CD4-positive, alpha-beta T cell (primary cell): ENCODE measurements at regions of chr16 and their contacts with region 1.

Region 1: GRCh38 chr16:4616047-4616811 is 1.5 kb upstream of the UBALD1 start:
- DNase-seq: peak; percentile 97 to 100 (median 98)
- ATAC-seq: peak; percentile 89
- H3K4me3 ChIP-seq: peak overlapping the region; percentile 76
- H3K4me3 Mint-ChIP-seq: peak overlapping the region; percentile 99
- H3K27ac ChIP-seq: peak overlapping the region; percentile 90 to 97
- H3K27ac Mint-ChIP-seq: peak overlapping the region; percentile 98
- H3K4me1 ChIP-seq: peaks cover 59% of the 10 kb centered on the region
- H3K4me1 Mint-ChIP-seq: peaks cover 26% of the 10 kb centered on the region
- H3K27me3 ChIP-seq: no peaks in the 10 kb centered on the region
- H3K27me3 Mint-ChIP-seq: no peaks in the 10 kb centered on the region
- CTCF ChIP-seq: peak; percentile 65

Region 2: GRCh38 chr16:4261557-4262172 is 354.6 kb before region 1 on chr16:
- CTCF ChIA-PET with region 1: no interaction called
- POLR2A ChIA-PET with region 1: no interaction called
- intact Hi-C with region 1: no loop called
- DNase-seq: peak in 10 of 14 experiments; percentile 14 to 64 (median 26)
- ATAC-seq: peak; percentile 77
- H3K4me3 ChIP-seq: no peak overlapping the region
- H3K4me3 Mint-ChIP-seq: no peak overlapping the region
- H3K27ac ChIP-seq: no peak overlapping the region
- H3K27ac Mint-ChIP-seq: peak overlapping the region; percentile 30
- H3K4me1 ChIP-seq: peaks cover 2% of the 10 kb centered on the region
- H3K4me1 Mint-ChIP-seq: peaks cover 8% of the 10 kb centered on the region
- H3K27me3 ChIP-seq: no peaks in the 10 kb centered on the region
- H3K27me3 Mint-ChIP-seq: no peaks in the 10 kb centered on the region
- CTCF ChIP-seq: peak; percentile 50

Region 3: GRCh38 chr16:4350787-4351659 is 265.2 kb before region 1 on chr16 and contains the start of gene PAM16:
- CTCF ChIA-PET with region 1: no interaction called
- POLR2A ChIA-PET with region 1: no interaction called
- intact Hi-C with region 1: loop called in 1 of 2 experiments (anchors 10 kb)
- DNase-seq: peak; percentile 95 to 100 (median 97)
- ATAC-seq: peak; percentile 85
- H3K4me3 ChIP-seq: peak within 1 kb of the TSS; percentile 96
- H3K4me3 Mint-ChIP-seq: peak within 1 kb of the TSS; percentile 98
- H3K27ac ChIP-seq: peak within 1 kb of the TSS; percentile 69 to 71
- H3K27ac Mint-ChIP-seq: peak within 1 kb of the TSS; percentile 94
- H3K4me1 ChIP-seq: peaks cover 42% of the 10 kb centered on the region
- H3K4me1 Mint-ChIP-seq: peaks cover 27% of the 10 kb centered on the region
- H3K27me3 ChIP-seq: no peaks in the 10 kb centered on the region
- H3K27me3 Mint-ChIP-seq: no peaks in the 10 kb centered on the region
- CTCF ChIP-seq: no peak
- total RNA-seq, gene PAM16: 24.9 to 26.8 TPM

Region 4: DNA sequence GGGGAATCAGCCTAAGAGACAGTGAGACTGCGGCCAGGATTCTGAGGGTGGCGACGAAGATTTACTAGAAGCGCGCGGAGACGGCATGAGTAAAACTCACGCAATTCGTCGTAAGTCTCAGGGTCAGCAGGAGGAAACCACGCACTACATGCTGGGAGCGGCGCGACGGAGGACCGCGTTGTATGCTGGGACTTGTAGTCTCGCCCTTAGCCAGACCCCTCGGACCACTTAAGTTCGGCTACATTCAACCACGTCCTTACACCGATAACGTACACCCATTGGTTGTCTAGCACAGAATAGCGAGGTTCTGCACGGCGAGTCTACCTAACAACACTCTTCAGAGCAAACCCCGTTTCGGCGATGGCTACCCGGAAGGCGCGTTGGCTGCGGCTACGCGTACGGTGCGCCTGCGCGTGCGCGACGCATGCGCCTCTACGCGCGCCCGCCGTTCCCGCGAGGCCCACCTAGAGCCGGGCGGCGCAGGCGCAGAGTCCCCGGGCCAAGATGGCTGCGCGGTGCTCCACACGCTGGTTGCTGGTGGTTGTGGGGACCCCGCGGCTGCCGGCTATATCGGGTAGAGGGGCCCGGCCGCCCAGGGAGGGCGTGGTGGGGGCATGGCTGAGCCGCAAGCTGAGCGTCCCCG is 190.7 kb before region 1 on chr16 and contains the start of gene DNAJA3:
- CTCF ChIA-PET with region 1: no interaction called
- POLR2A ChIA-PET with region 1: no interaction called
- intact Hi-C with region 1: loop called in 1 of 2 experiments (anchors 5 kb)
- DNase-seq: peak; percentile 82 to 98 (median 90)
- ATAC-seq: peak; percentile 84
- H3K4me3 ChIP-seq: peak within 1 kb of the TSS; percentile 71
- H3K4me3 Mint-ChIP-seq: peak within 1 kb of the TSS; percentile 91
- H3K27ac ChIP-seq: peak within 1 kb of the TSS; percentile 93 to 99
- H3K27ac Mint-ChIP-seq: peak within 1 kb of the TSS; percentile 99
- H3K4me1 ChIP-seq: peaks cover 34% of the 10 kb centered on the region
- H3K4me1 Mint-ChIP-seq: peaks cover 27% of the 10 kb centered on the region
- H3K27me3 ChIP-seq: no peaks in the 10 kb centered on the region
- H3K27me3 Mint-ChIP-seq: no peaks in the 10 kb centered on the region
- CTCF ChIP-seq: no peak
- total RNA-seq, gene DNAJA3: 17.2 to 18.8 TPM

Region 5: GRCh38 chr16:4654011-4654963 is 38.1 kb after region 1 on chr16:
- CTCF ChIA-PET with region 1: interaction called, 10 read pairs
- POLR2A ChIA-PET with region 1: interaction called, 4 read pairs
- intact Hi-C with region 1: loop called in 1 of 2 experiments (anchors 5 kb)
- DNase-seq: no peak
- ATAC-seq: no peak
- H3K4me3 ChIP-seq: no peak overlapping the region
- H3K4me3 Mint-ChIP-seq: peak overlapping the region; percentile 11
- H3K27ac ChIP-seq: no peak overlapping the region
- H3K27ac Mint-ChIP-seq: no peak overlapping the region
- H3K4me1 ChIP-seq: peaks cover 30% of the 10 kb centered on the region
- H3K4me1 Mint-ChIP-seq: peaks cover 24% of the 10 kb centered on the region
- H3K27me3 ChIP-seq: no peaks in the 10 kb centered on the region
- H3K27me3 Mint-ChIP-seq: no peaks in the 10 kb centered on the region
- CTCF ChIP-seq: no peak

Region 6: DNA sequence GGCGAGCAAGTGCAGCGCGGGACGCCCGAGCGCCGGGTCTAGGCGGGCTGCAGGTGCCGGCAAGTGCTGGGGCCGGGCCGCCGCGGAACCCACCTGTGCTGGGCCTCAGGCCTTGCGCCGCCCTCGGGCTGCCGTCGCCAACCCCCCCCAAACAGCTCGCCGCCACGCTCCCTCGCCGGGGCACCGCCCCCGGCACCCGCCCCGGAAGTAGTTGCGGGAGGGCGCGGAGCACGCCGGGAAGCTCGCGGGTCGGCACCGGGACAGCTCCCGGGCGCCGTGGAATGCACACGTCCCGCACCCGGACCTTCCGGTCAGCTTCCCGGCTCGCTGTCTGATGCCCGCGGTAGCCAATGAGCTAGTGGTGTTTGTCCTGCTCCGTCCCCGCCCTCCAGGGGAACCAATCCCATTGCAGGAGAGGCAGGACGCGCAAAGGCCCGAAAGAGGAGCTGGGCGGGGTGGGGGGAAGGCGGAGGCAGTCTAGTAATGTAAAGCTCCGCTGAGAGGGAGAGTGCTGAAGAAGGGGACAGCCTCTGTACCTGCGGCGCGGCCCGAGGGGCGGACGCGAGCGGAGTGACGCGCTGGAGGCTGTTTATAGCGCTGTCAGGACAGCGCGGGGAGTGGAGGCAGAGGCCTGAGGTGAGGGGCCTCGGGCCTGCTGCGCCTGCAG is 118.0 kb after region 1 on chr16 and contains the starts of genes ANKS3 and DNAAF8:
- CTCF ChIA-PET with region 1: interaction called, 4 read pairs
- POLR2A ChIA-PET with region 1: interaction called, 25 read pairs
- intact Hi-C with region 1: no loop called
- DNase-seq: peak; percentile 57 to 90 (median 72)
- ATAC-seq: peak; percentile 76
- H3K4me3 ChIP-seq: peak within 1 kb of the TSS; percentile 99
- H3K4me3 Mint-ChIP-seq: peak within 1 kb of the TSS; percentile 98
- H3K27ac ChIP-seq: peak within 1 kb of the TSS; percentile 68 to 85
- H3K27ac Mint-ChIP-seq: peak within 1 kb of the TSS; percentile 90
- H3K4me1 ChIP-seq: peaks cover 21% of the 10 kb centered on the region
- H3K4me1 Mint-ChIP-seq: peaks cover 31% of the 10 kb centered on the region
- H3K27me3 ChIP-seq: no peaks in the 10 kb centered on the region
- H3K27me3 Mint-ChIP-seq: no peaks in the 10 kb centered on the region
- CTCF ChIP-seq: no peak
- total RNA-seq, gene ANKS3: 13.5 TPM
- total RNA-seq, gene DNAAF8: 0.25 TPM in 1 of 2 experiments, not detected in the other

Region 7: DNA sequence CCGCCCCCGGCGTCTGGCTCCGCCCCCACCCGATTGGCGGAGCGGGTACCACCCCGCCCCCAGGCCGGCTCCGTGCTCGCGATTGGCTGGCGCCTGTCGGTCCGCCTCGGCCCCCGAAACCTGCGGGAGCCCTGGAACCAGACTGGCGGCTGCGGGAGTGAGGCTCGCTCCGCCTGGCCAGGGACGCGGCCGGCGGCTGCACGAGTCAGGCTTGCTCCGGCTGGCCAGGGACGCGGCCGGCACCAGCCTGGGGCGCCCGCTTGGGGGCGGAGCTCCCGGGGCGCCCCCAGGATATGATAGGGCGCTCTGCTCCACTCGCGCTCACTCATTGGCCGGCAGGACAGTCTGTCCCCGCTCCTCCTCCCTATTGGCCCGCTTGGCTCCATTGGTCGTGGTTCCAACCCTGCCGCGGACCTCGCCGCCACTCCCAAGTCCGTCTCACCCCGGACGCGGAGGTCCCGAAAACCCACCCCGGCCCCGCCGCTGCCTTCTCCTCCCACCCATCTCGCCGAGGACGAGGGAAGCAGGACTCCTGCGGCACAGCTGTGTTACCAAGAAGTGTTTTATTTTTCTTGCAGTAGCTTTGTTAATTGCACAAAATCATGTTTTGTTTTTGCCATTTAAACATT is 186.5 kb after region 1 on chr16:
- CTCF ChIA-PET with region 1: no interaction called
- POLR2A ChIA-PET with region 1: interaction called, 10 read pairs
- intact Hi-C with region 1: loop called in 1 of 2 experiments (anchors 10 kb)
- DNase-seq: peak; percentile 76 to 93 (median 88)
- ATAC-seq: peak; percentile 83
- H3K4me3 ChIP-seq: peak overlapping the region; percentile 61
- H3K4me3 Mint-ChIP-seq: peak overlapping the region; percentile 92
- H3K27ac ChIP-seq: peak overlapping the region in 1 of 2 donors; percentile 56
- H3K27ac Mint-ChIP-seq: peak overlapping the region; percentile 96
- H3K4me1 ChIP-seq: peaks cover 24% of the 10 kb centered on the region
- H3K4me1 Mint-ChIP-seq: peaks cover 22% of the 10 kb centered on the region
- H3K27me3 ChIP-seq: no peaks in the 10 kb centered on the region
- H3K27me3 Mint-ChIP-seq: no peaks in the 10 kb centered on the region
- CTCF ChIP-seq: no peak